GM10248 (cell line): ENCODE measurements at regions of chr4 and their contacts with region 1.

Region 1: GRCh38 chr4:25756503-25756902 is 100.9 kb downstream of the SLC34A2 start:
- DNase-seq: no peak
- CTCF ChIP-seq: no peak

Region 2: GRCh38 chr4:25457053-25457715 is 299.3 kb before region 1 on chr4:
- CTCF ChIA-PET with region 1: no interaction called
- POLR2A ChIA-PET with region 1: no interaction called
- DNase-seq: no peak
- CTCF ChIP-seq: no peak

Region 3: GRCh38 chr4:25743971-25744370 is 12.5 kb before region 1 on chr4:
- CTCF ChIA-PET with region 1: interaction called, 10 read pairs
- POLR2A ChIA-PET with region 1: no interaction called
- DNase-seq: no peak
- CTCF ChIP-seq: no peak

Region 4: GRCh38 chr4:25767877-25768725 is 11.6 kb after region 1 on chr4:
- CTCF ChIA-PET with region 1: interaction called, 11 read pairs
- POLR2A ChIA-PET with region 1: no interaction called
- DNase-seq: no peak
- CTCF ChIP-seq: peak; percentile 62

Region 5: DNA sequence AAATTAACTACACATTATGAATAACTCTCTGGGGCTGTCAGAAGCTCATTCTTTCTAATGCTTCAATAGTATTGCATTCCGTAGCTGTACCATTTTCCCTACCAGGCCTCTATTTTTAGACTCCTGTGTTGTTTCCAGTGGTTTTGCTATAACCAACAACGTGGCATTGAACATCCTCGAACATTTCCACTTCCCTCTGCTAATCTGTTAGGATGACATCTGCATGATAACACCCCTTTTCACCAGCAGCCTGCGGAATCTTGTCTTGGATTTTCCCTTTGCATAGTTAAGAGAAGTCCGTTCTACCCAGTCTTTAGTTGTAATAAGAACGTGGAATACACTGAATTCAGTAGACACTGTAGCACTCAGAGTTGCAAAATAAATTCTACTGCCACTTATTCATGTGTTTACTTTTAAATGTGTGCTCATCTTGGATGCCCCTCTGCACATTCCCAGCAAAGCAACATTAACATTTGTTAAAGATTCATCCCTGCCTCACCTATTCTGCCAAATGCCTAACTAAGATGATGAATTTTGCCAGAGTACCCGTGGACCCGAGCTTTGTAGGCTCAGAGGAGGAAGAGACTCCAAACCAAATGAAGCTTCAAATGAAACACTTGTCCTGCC is 50.7 kb after region 1 on chr4:
- CTCF ChIA-PET with region 1: no interaction called
- POLR2A ChIA-PET with region 1: no interaction called
- DNase-seq: no peak
- CTCF ChIP-seq: no peak